Right lobe of liver (tissue), 6 donors: ENCODE measurements at regions of chr4 and their contacts with region 1.

Region 1: GRCh38 chr4:7371210-7371941 is 63.4 kb downstream of the PSAPL1 start:
- DNase-seq: peak in 1 of 3 donors; percentile 2
- ATAC-seq: no peak
- H3K4me3 ChIP-seq: no peak overlapping the region
- H3K27ac ChIP-seq: no peak overlapping the region
- H3K4me1 ChIP-seq: no peaks in the 10 kb centered on the region
- H3K27me3 ChIP-seq: no peaks in the 10 kb centered on the region
- CTCF ChIP-seq: no peak
- POLR2A ChIP-seq: no peak

Region 2: GRCh38 chr4:7423801-7424552 is 52.6 kb after region 1 on chr4:
- intact Hi-C with region 1: loop called in 1 of 2 experiments (anchors 10 kb)
- DNase-seq: peak in 2 of 3 donors; percentile 10 to 35
- ATAC-seq: no peak
- H3K4me3 ChIP-seq: no peak overlapping the region
- H3K27ac ChIP-seq: no peak overlapping the region
- H3K4me1 ChIP-seq: no peaks in the 10 kb centered on the region
- H3K27me3 ChIP-seq: no peaks in the 10 kb centered on the region
- CTCF ChIP-seq: no peak
- POLR2A ChIP-seq: no peak